GM13976 (cell line): ENCODE measurements at regions of chr18 and their contacts with region 1.

Region 1: DNA sequence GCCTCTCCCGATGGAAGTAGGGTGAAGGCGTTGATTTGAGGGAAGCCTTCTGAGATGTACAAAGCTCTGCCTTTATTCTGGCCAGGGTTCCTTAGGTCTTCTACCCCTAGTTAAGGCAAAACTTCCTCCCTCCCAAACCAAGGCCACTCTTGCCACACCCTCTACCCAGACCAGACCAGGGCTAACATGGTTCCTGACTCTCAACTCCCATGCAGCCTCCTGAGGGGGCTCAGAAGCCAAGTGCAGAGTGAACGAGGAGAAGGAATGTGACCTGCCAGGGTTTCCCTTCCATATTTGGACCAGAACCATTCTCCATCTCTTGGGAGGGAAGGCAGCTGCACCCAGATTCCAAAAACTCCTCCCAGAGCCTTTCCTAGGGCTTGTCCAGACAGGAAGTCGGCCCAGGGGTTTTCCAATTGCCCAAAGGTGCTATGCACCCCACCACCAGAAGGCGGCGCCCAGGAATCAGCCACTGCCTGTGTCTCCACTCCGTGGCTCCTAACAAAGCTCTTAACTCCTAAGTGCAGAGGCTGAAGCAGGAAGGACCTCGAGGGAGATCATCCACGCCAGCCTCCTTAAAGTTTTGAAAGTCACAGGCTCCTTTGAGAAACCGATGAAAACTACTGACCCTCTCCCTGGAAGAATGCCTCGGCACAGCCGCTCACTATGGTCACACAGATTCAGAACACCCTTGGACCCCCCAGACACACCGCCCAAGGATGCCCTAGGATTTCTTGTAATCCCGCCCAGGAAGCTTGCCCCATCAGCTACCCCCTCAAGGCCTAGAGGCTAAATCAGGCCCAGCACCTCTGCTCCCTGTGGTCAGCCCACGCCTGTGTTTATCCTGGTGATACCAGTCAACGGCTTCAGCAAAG is 157.8 kb downstream of the SMAD2 start:
- DNase-seq: peak; percentile 72
- CTCF ChIP-seq: peak; percentile 88

Region 2: GRCh38 chr18:47380153-47380552 is 392.5 kb before region 1 on chr18:
- in situ Hi-C with region 1: no loop called
- DNase-seq: no peak
- CTCF ChIP-seq: no peak

Region 3: DNA sequence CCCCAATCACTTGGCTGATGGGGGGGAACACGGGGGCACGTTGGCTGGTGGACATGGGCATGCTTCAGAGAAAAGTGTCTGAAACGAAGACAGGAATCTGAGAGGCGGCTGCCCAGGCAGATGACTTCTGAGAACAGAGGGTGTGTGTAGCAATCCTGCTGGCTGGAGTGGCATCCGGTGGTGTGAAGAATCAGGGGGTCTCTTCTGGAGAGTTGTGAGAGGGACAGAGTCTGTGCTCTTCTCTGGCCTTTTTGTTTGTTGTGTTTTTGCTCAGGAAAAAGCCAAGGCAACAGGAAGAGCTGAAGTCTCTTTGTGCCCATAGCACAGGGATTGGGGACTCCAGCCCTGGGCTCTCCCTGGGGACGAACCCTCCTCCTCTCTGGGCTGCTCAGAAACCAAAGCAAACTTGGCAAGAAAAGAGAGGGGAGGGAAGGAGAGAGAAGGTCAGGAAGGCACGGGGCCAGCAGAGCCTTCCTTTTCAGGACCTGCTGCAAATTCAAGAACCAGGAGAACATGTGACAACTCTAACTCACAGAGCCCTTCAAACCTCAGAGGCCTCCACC is 254.9 kb after region 1 on chr18:
- in situ Hi-C with region 1: loop called (anchors 5 kb)
- DNase-seq: no peak
- CTCF ChIP-seq: no peak

Region 4: GRCh38 chr18:48430150-48430549 is 657.5 kb after region 1 on chr18:
- in situ Hi-C with region 1: loop called (anchors 10 kb)
- DNase-seq: no peak
- CTCF ChIP-seq: no peak